ENCODE measurements at regions of chrX and their contacts with region 1.

Region 1: DNA sequence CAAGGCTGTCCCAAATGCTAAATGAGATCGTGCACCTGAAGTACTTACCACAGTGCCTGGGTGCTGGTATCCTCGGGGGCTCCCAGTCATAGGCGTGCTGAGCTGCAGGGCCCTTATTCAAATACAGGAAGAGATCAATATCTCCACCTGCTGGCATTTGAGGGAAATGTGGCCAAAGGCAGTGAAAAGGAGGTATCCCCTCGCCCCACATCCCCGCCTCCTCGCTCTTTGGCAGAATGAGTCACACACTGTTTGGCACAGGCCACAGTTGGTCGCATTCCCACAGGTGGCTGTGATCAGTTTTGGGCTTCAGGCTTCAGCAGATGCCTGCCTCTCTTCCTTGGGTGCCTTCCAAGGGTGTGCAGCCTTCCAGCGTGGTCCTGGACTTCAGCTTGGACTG is 28.4 kb downstream of the ZNF185 start:
- DNase-seq: peak; percentile 53 to 59
- H3K4me3 ChIP-seq: no peak overlapping the region
- H3K4me3 Mint-ChIP-seq: no peak overlapping the region
- H3K27ac Mint-ChIP-seq: no peak overlapping the region
- H3K4me1 ChIP-seq: no peaks in the 10 kb centered on the region
- H3K4me1 Mint-ChIP-seq: no peaks in the 10 kb centered on the region
- H3K27me3 ChIP-seq: no peaks in the 10 kb centered on the region
- H3K27me3 Mint-ChIP-seq: peaks cover 3% of the 10 kb centered on the region
- CTCF ChIP-seq: peak; percentile 36 to 41

Region 2: DNA sequence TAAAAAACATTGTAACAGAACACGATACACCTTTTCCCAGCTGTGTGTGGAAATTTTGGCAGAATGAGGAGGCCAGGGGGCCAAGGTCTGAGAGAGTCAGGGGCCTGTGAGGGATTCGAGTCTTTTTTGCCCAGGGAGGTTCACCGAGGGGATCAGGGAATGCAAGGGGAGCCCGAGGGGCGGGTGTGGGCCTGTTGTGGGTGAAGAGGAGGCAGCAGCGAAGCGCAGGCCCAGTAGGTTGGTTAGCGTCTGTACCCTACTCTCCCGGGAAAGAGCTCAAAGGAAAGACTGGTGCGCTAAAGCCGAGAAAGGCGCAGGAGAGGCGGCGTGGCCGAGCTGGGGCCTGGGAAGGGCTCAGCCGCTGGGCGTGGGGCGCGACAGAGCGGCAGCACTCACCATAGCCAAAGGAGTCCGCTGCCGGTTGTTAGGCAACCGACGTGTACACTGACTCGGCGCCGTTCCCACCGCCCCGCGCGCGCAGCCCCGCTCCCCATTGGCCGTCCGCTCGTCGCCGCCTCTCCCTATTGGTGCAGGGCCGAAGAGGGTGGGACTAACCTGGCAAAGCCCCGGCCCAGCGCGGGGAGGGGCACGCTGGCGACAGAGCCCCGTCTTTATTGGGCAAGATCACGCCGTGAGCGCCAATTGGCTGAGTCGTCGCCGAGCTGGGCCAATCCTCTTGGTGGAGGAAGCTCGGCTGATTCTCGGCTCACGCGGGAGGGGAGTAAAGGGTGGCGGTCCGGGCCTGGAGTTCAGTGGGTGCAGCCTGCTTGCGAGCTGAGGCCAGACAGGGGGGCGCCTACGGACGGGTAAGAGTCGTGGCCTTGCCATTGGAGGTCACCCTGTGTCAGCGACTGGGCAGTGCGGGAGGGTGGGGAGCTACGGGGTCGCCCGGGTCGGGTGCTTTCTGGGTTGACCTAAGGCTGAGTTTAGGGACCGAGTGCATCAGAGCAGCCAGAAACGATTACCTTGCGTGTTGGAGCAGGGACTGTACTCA is 95.7 kb before region 1 on chrX and contains the starts of genes CETN2 and NSDHL:
- CTCF ChIA-PET with region 1: no interaction called
- POLR2A ChIA-PET with region 1: no interaction called
- intact Hi-C with region 1: loop called (anchors 5 kb)
- DNase-seq: peak; percentile 95
- H3K4me3 ChIP-seq: peak within 1 kb of the TSS; percentile 82
- H3K4me3 Mint-ChIP-seq: peak within 1 kb of the TSS; percentile 97
- H3K27ac Mint-ChIP-seq: peak within 1 kb of the TSS; percentile 98
- H3K4me1 ChIP-seq: no peaks in the 10 kb centered on the region
- H3K4me1 Mint-ChIP-seq: no peaks in the 10 kb centered on the region
- H3K27me3 ChIP-seq: no peaks in the 10 kb centered on the region
- H3K27me3 Mint-ChIP-seq: no peaks in the 10 kb centered on the region
- CTCF ChIP-seq: no peak
- total RNA-seq, gene CETN2: 23.8 and 23.9 TPM in 2 replicates
- total RNA-seq, gene NSDHL: 30.5 and 34.9 TPM in 2 replicates

Region 3: DNA sequence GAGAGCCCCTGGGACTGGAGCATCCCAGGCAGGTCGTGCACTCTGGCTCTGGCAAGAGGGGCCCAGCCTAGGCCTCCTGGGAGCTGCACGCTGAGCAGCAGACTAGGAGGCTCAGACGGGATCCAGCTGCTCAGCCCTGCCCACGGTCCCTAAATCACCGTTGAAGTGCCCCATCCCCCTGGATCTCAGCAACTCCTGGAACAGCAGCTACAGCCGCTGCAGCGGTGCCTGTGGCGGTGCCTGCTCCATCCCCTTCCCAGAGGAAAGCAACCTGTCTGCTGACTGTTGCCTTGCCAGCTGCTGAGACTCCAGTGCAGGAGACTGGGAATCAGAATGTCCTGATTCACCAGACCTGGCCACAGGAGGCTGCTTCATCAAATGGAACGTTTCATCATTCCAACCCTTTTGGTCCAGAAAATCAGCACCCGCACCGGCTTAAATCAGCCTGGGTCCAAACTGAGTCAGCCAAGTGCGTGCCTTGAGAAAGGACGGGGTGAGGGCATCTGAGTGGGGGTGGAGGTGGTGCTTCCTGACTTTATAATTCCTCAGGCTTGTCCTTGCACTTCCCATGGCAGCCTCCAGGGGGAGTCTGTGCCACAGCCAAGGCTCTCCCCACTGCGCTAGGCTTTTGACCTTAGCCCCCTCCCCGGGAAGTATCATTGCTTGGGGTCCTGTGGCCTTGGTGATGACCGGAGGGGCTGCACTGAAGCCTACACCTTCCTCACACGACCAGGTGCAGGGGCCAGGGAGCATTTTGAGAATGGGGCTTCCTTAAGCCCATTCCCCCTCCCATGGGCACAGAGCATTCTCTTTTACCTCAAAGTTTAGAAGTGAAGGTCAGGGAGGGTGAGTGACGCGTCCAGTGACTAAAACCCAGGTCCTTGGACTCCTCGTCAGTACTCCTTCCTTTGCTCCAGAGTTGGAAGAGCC is 21.9 kb before region 1 on chrX:
- CTCF ChIA-PET with region 1: interaction called, 7 read pairs
- POLR2A ChIA-PET with region 1: no interaction called
- intact Hi-C with region 1: loop called (anchors 1 kb)
- DNase-seq: peak in 1 of 2 experiments; percentile 57
- H3K4me3 ChIP-seq: no peak overlapping the region
- H3K4me3 Mint-ChIP-seq: no peak overlapping the region
- H3K27ac Mint-ChIP-seq: no peak overlapping the region
- H3K4me1 ChIP-seq: no peaks in the 10 kb centered on the region
- H3K4me1 Mint-ChIP-seq: no peaks in the 10 kb centered on the region
- H3K27me3 ChIP-seq: no peaks in the 10 kb centered on the region
- H3K27me3 Mint-ChIP-seq: no peaks in the 10 kb centered on the region
- CTCF ChIP-seq: peak; percentile 63 to 64

Region 4: GRCh38 chrX:152989292-152989658 is 63.0 kb after region 1 on chrX:
- CTCF ChIA-PET with region 1: no interaction called
- POLR2A ChIA-PET with region 1: no interaction called
- intact Hi-C with region 1: no loop called
- DNase-seq: no peak
- H3K4me3 ChIP-seq: no peak overlapping the region
- H3K4me3 Mint-ChIP-seq: no peak overlapping the region
- H3K27ac Mint-ChIP-seq: no peak overlapping the region
- H3K4me1 ChIP-seq: no peaks in the 10 kb centered on the region
- H3K4me1 Mint-ChIP-seq: no peaks in the 10 kb centered on the region
- H3K27me3 ChIP-seq: no peaks in the 10 kb centered on the region
- H3K27me3 Mint-ChIP-seq: no peaks in the 10 kb centered on the region
- CTCF ChIP-seq: no peak

Region 5: GRCh38 chrX:153004780-153005179 is 78.5 kb after region 1 on chrX:
- CTCF ChIA-PET with region 1: no interaction called
- POLR2A ChIA-PET with region 1: no interaction called
- intact Hi-C with region 1: no loop called
- DNase-seq: no peak
- H3K4me3 ChIP-seq: no peak overlapping the region
- H3K4me3 Mint-ChIP-seq: no peak overlapping the region
- H3K27ac Mint-ChIP-seq: no peak overlapping the region
- H3K4me1 ChIP-seq: no peaks in the 10 kb centered on the region
- H3K4me1 Mint-ChIP-seq: no peaks in the 10 kb centered on the region
- H3K27me3 ChIP-seq: no peaks in the 10 kb centered on the region
- H3K27me3 Mint-ChIP-seq: no peaks in the 10 kb centered on the region
- CTCF ChIP-seq: no peak

Measured in Caco-2 (cell line).